ENCODE measurements at regions of chr6 and their contacts with region 1.

Region 1: GRCh38 chr6:28816909-28817807 is 106.6 kb downstream of the TRIM27 start:
- DNase-seq: peak; percentile 66
- ATAC-seq: peak; percentile 71
- H3K4me3 Mint-ChIP-seq: peak overlapping the region; percentile 5
- H3K27ac Mint-ChIP-seq: no peak overlapping the region
- H3K4me1 Mint-ChIP-seq: peaks cover 14% of the 10 kb centered on the region
- H3K27me3 Mint-ChIP-seq: peaks cover 72% of the 10 kb centered on the region

Region 2: DNA sequence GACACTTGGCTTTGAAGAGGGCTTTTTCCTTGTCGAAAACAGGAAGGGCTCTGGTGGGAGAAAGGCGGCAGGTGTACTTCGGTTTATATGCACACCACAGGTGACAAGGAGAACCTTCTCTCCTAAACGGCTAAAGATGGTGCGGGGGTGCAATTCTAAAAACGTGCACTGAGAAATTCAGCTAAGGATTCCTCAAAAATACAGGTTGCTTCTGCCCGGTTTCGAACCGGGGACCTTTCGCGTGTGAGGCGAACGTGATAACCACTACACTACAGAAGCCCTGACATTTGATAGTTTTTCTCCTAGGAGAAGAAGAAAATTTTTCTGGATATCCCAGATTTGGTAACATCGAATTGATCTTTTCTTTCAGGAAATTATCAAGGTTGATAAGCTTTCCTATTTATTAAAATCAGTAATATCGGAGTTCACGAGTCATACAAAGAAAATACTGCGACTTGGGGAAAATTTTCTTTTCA is 1537.1 kb before region 1 on chr6:
- CTCF ChIA-PET with region 1: no interaction called
- POLR2A ChIA-PET with region 1: no interaction called
- intact Hi-C with region 1: loop called in 1 of 2 experiments (anchors 10 kb)
- DNase-seq: peak; percentile 64
- ATAC-seq: peak; percentile 36
- H3K4me3 Mint-ChIP-seq: peak overlapping the region; percentile 58
- H3K27ac Mint-ChIP-seq: peak overlapping the region; percentile 13
- H3K4me1 Mint-ChIP-seq: peaks cover 10% of the 10 kb centered on the region
- H3K27me3 Mint-ChIP-seq: peaks cover 71% of the 10 kb centered on the region

Region 3: GRCh38 chr6:27553123-27553904 is 1263.8 kb before region 1 on chr6:
- CTCF ChIA-PET with region 1: no interaction called
- POLR2A ChIA-PET with region 1: no interaction called
- intact Hi-C with region 1: loop called in 1 of 2 experiments (anchors 10 kb)
- DNase-seq: peak; percentile 61
- ATAC-seq: peak; percentile 83
- H3K4me3 Mint-ChIP-seq: peak overlapping the region; percentile 29
- H3K27ac Mint-ChIP-seq: no peak overlapping the region
- H3K4me1 Mint-ChIP-seq: peaks cover 5% of the 10 kb centered on the region
- H3K27me3 Mint-ChIP-seq: peaks cover 58% of the 10 kb centered on the region

Region 4: GRCh38 chr6:28737750-28738395 is 79.3 kb before region 1 on chr6:
- CTCF ChIA-PET with region 1: no interaction called
- POLR2A ChIA-PET with region 1: no interaction called
- intact Hi-C with region 1: loop called in 1 of 2 experiments (anchors 2 kb)
- DNase-seq: no peak
- ATAC-seq: no peak
- H3K4me3 Mint-ChIP-seq: peak overlapping the region; percentile 11
- H3K27ac Mint-ChIP-seq: no peak overlapping the region
- H3K4me1 Mint-ChIP-seq: peaks cover 5% of the 10 kb centered on the region
- H3K27me3 Mint-ChIP-seq: peaks cover 62% of the 10 kb centered on the region

Measured in activated CD4-positive, alpha-beta T cell treated with anti-CD3 and anti-CD28 coated beads for 36 hours (primary cell).